Activated naive CD4-positive, alpha-beta T cell treated with anti-CD3 and anti-CD28 coated beads for 36 hours (primary cell): ENCODE measurements at regions of chr16 and their contacts with region 1.

Region 1: DNA sequence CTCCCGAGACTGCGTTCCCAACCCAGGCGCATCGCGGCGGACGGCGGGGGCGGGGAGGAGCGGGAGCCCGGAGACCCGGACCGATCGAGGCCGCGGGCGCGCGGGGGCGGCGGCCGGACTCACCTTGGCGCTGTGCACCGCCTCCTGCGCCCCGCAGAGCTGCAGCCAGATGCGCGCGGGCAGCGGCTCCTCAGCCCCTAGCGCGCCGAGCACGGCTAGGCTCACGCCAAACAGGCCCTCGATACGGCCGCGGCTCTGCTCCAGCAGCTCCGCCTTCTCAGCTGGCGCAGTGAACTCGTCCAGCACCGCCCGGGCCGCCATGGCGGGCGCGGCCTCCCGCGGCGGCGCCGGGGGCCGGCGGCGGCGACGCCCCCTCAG is 339 bp downstream of the N4BP1 start:
- DNase-seq: peak; percentile 40
- H3K4me3 Mint-ChIP-seq: peak overlapping the region; percentile 85
- H3K27ac Mint-ChIP-seq: peak overlapping the region; percentile 89
- H3K4me1 Mint-ChIP-seq: peaks cover 37% of the 10 kb centered on the region
- H3K27me3 Mint-ChIP-seq: no peaks in the 10 kb centered on the region

Region 2: DNA sequence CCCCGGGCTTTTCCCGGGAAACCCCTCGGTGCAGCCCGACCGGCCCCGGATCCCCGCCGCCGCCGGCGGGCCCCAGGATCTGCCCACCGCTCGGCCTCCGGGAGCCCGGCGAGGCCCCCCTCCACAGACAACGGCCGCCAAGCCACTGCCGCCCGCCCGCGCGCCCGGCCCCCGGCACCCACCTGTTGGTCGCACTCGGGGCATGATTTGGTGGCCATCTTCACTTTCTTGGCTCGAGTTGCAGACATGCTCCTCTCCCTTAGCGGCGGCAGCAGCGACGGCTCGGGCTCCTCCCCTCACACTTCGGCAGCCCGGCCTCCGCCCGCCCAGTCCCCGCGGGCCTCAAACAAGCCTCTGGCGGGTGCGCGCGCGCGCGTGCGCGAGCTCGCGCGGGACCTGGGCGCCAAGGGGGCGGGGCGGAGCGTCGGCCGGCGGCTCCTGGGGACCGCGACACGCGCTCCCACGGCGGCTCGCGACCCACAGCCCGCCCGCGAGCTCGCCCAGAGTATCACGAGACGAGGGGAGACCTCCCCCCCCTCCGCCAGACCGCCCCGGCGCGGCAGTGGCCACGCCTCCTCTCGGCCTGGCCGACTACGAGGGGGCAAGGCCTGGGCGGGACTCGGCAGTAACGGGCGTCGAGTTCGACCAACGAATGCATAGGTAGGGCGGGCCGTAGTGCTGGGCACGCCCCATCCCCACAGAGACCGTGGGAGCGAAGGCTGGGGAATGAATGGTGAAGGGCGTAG is 1778.6 kb before region 1 on chr16 and contains the start of gene C16orf87:
- CTCF ChIA-PET with region 1: no interaction called
- intact Hi-C with region 1: loop called (anchors 2 kb)
- DNase-seq: peak; percentile 91
- H3K4me3 Mint-ChIP-seq: peak within 1 kb of the TSS; percentile 97
- H3K27ac Mint-ChIP-seq: peak within 1 kb of the TSS; percentile 96
- H3K4me1 Mint-ChIP-seq: peaks cover 31% of the 10 kb centered on the region
- H3K27me3 Mint-ChIP-seq: no peaks in the 10 kb centered on the region
- total RNA-seq, gene C16orf87: 13.4 to 13.5 TPM

Region 3: GRCh38 chr16:48385272-48386150 is 224.1 kb before region 1 on chr16 and contains the start of gene SIAH1:
- CTCF ChIA-PET with region 1: no interaction called
- intact Hi-C with region 1: loop called (anchors 1 kb)
- DNase-seq: peak; percentile 83
- H3K4me3 Mint-ChIP-seq: peak within 1 kb of the TSS; percentile 89
- H3K27ac Mint-ChIP-seq: peak within 1 kb of the TSS; percentile 90
- H3K4me1 Mint-ChIP-seq: peaks cover 22% of the 10 kb centered on the region
- H3K27me3 Mint-ChIP-seq: no peaks in the 10 kb centered on the region
- total RNA-seq, gene SIAH1: 13.7 to 14.6 TPM

Region 4: DNA sequence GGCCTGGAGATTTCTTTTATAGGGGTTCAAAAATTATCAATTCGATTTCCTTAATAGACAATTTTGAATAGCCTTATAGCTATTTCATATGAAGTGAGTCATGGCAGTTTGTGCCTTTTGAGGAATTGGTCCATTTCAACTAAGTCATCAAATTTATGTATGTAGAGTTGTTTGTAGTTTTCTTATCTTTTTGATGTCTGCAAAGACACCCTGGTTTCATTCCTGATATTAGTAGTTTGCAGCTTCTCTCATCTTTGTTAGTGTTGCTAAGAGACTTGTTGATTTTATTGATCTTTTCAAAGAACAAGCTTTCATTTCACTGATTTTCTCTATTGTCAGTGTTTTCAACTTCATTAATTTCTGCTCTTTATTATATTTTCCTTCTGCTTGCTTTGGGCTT is 43.9 kb before region 1 on chr16:
- CTCF ChIA-PET with region 1: interaction called, 3 read pairs
- intact Hi-C with region 1: loop called (anchors 1 kb)
- DNase-seq: no peak
- H3K4me3 Mint-ChIP-seq: no peak overlapping the region
- H3K27ac Mint-ChIP-seq: no peak overlapping the region
- H3K4me1 Mint-ChIP-seq: peaks cover 59% of the 10 kb centered on the region
- H3K27me3 Mint-ChIP-seq: no peaks in the 10 kb centered on the region

Region 5: DNA sequence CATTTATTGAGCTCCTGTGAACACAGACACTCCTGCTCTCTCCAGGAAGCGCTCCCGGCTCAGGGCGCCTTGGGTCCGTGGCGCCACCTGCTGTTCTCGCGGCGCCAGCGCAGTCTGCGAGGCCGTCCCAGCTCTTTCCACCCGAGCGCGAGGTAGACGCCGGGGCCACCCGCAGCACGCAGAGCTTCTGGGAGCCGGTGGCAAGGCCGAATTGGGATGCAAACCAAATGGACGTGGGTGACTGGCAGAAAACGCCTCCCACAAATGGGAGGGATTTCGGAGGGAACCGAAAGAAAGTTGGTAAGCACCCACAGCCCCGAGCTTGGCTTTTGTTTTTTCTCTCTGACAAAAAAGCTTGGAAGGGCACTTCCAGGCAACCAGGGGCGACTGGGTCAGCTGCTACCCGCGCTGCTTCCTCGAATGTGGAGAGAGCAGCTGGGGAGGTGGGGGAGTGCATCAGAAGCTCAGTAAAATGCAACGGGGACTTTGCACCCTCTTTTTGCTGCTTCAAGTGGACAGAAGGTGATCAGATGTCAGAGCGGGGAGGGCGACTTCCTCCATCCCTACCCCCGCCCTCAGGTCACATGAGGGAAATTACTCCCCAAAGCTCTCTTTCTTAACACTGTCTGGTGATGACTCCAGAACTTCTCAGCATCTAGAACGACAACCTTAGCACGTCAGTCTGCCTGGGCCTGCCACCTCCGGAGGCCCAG is 13.8 kb after region 1 on chr16:
- CTCF ChIA-PET with region 1: interaction called, 48 read pairs
- intact Hi-C with region 1: loop called (anchors 1 kb)
- DNase-seq: peak; percentile 85
- H3K4me3 Mint-ChIP-seq: peak overlapping the region; percentile 73
- H3K27ac Mint-ChIP-seq: peak overlapping the region; percentile 71
- H3K4me1 Mint-ChIP-seq: peaks cover 23% of the 10 kb centered on the region
- H3K27me3 Mint-ChIP-seq: no peaks in the 10 kb centered on the region